ENCODE measurements at regions of chr19 and their contacts with region 1.

Region 1: DNA sequence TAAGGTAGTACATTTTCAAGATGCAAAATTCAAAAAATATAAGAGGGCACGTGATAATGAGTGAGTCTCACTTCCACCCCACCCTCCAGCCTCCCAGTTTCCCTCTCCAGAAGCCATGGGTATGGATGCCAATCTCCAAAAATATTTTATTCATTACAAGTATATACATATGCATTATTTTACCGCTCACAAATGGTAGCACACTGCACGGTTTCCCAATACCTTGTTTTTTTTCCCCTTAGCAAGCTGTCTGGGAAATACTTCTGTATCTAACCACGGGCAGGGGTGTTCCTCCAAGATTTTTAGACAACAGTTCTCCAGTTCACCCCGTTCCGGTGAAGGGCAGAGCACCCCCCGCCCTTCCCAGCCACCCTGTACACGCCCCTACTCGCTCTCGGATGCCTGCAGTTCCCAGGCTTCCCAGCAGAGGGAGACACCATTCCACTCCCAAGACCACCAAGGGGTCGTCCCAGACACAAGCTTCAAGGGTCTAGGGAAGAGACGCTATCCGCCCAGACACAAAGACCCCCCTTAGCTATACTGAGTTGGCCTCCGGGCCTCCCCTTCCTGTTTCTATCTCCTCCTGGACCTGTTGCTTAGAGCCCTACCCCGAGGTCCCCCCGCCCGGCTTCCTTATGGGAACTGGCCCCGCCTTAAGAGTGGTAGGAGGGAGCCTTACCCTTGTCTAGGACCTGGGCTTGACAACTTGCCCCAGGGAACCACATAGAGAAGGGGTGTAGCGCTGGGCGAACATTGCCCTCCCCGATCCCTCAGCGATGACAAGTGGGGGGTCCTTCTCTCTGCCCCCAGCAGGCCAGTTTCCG is 1.1 kb upstream of the FXYD3 start:
- DNase-seq: peak; percentile 79
- H3K4me3 ChIP-seq: peak overlapping the region; percentile 43
- H3K27ac ChIP-seq: no peak overlapping the region
- H3K4me1 ChIP-seq: no peaks in the 10 kb centered on the region
- CTCF ChIP-seq: peak; percentile 97

Region 2: DNA sequence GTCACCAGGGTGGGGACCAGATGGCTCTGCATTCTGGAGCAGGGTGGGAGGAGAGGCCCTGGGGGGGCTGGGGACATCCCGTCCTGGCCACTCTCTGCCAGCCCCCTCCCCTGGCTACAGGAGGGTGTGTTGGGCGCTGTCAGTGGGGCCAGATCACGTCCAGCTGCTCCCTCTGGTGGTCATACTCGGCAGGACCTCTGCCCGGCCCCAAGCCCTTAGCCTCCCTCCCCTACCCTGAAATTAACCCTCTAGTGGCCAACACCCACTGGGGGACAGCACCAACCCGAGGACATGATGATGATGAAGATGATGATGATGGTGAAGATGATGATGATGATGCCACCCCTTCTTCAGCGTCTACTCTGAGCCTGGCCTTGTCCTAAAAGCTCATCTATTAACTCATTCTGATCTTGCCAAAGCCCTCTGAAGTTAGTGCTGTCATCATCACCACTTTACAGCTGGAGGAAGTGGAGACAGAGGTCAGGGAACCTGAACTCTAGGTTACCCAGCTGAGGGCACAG is 20.9 kb after region 1 on chr19:
- CTCF ChIA-PET with region 1: no interaction called
- POLR2A ChIA-PET with region 1: no interaction called
- intact Hi-C with region 1: loop called (anchors 1 kb)
- DNase-seq: peak; percentile 79
- H3K4me3 ChIP-seq: no peak overlapping the region
- H3K27ac ChIP-seq: no peak overlapping the region
- H3K4me1 ChIP-seq: peaks cover 9% of the 10 kb centered on the region
- CTCF ChIP-seq: peak; percentile 91

Region 3: DNA sequence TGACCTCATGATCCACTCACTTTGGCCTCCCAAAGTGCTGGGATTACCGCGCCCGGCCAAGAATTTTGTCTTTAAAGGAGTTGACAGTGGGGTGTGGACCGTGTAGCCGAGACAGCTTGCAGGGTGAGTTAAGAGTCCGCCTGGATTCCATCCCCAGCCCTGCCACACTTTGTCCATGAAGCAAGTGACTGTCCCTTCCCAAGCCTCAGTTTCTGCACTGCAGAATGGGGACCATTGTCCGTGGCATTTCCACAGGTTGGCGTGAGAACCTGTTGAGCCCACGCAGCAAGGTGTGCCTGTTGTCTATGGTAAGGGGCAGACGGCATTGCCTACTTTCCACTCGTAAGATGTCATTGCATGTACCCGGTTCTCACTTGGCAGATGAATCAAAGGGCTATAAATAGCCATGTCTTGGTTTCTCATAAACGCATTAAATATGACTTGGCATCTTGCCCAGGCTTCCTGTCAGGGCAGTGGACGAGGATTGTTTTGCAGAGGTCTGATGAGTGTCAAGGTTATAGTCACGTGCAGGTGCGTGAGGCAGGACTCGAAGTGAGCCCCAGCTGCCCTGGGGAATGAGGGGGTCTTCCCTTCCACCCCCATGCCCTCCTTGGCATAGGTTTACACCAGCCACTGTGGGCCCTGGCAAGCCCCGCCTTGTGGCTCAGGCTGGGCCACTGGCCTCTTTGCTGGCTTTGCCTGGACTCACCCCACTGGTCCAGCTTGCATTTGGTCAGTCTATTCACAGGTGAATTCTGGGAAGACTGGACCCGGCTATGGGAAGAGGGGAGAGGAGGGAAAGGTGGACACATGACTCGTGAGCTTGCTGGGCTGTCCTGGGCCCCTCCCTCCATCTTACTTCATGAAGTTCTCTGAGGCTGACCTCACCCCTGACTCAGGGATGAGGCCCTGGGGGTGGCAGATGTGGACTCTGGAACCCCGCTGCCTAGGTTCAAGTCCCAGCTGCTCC is 99.4 kb after region 1 on chr19:
- CTCF ChIA-PET with region 1: no interaction called
- POLR2A ChIA-PET with region 1: no interaction called
- intact Hi-C with region 1: loop called (anchors 1 kb)
- DNase-seq: peak; percentile 93
- H3K4me3 ChIP-seq: peak overlapping the region; percentile 38
- H3K27ac ChIP-seq: peak overlapping the region; percentile 83
- H3K4me1 ChIP-seq: peaks cover 77% of the 10 kb centered on the region
- CTCF ChIP-seq: no peak

Region 4: DNA sequence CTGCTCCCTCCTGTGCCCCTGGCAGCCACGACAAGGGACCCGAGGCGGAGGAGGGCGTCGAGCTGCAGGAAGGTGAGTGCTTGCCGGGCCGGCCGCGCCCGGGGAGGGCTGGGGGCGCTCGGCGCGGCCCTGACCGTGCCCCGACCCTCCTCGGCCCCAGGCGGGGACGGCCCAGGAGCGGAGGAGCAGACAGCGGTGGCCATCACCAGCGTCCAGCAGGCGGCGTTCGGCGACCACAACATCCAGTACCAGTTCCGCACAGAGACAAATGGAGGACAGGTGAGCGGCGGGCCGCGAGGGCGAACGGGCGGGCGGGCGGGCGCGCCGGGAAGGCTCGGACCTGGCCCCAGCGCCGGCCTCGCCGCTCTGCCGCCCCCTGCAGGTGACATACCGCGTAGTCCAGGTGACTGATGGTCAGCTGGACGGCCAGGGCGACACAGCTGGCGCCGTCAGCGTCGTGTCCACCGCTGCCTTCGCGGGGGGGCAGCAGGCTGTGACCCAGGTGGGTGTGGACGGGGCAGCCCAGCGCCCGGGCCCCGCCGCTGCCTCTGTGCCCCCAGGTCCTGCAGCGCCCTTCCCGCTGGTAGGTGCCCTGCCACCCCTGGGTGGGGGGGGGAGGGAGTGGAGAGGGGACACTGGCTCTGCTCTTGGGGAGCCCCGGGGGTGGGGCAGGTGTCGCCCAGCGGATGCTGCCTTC is 155.0 kb after region 1 on chr19:
- CTCF ChIA-PET with region 1: no interaction called
- POLR2A ChIA-PET with region 1: no interaction called
- intact Hi-C with region 1: no loop called
- DNase-seq: peak; percentile 90
- H3K4me3 ChIP-seq: peak overlapping the region; percentile 75
- H3K27ac ChIP-seq: peak overlapping the region; percentile 61
- H3K4me1 ChIP-seq: peaks cover 43% of the 10 kb centered on the region
- CTCF ChIP-seq: peak; percentile 73